Mammary epithelial cell (primary cell): ENCODE measurements at regions of chr20 and their contacts with region 1.

Region 1: GRCh38 chr20:39103732-39104131 is 141.6 kb downstream of the DHX35 start:
- DNase-seq: no peak
- H3K4me3 ChIP-seq: no peak overlapping the region
- H3K27ac ChIP-seq: no peak overlapping the region
- H3K4me1 ChIP-seq: no peaks in the 10 kb centered on the region
- H3K27me3 ChIP-seq: no peaks in the 10 kb centered on the region
- CTCF ChIP-seq: no peak

Region 2: GRCh38 chr20:39146394-39146793 is 42.7 kb after region 1 on chr20:
- CTCF ChIA-PET with region 1: no interaction called
- dilution Hi-C with region 1: loop called (anchors 5 kb)
- in situ Hi-C with region 1: no loop called
- intact Hi-C with region 1: no loop called
- DNase-seq: no peak
- H3K4me3 ChIP-seq: no peak overlapping the region
- H3K27ac ChIP-seq: no peak overlapping the region
- H3K4me1 ChIP-seq: no peaks in the 10 kb centered on the region
- H3K27me3 ChIP-seq: peaks cover 2% of the 10 kb centered on the region
- CTCF ChIP-seq: no peak